ENCODE measurements at regions of chr17 and their contacts with region 1.

Region 1: GRCh38 chr17:8997994-8998628 is 23.2 kb upstream of the NTN1 start:
- DNase-seq: peak; percentile 86
- ATAC-seq: peak; percentile 72
- H3K4me3 Mint-ChIP-seq: no peak overlapping the region
- H3K27ac Mint-ChIP-seq: no peak overlapping the region
- H3K4me1 Mint-ChIP-seq: peaks cover 17% of the 10 kb centered on the region
- H3K27me3 Mint-ChIP-seq: peaks cover 23% of the 10 kb centered on the region
- CTCF ChIP-seq: peak; percentile 95

Region 2: GRCh38 chr17:8798846-8799569 is 199.1 kb before region 1 on chr17 and contains the start of gene MFSD6L:
- CTCF ChIA-PET with region 1: interaction called, 12 read pairs
- POLR2A ChIA-PET with region 1: no interaction called
- intact Hi-C with region 1: no loop called
- DNase-seq: peak; percentile 28
- ATAC-seq: no peak
- H3K4me3 Mint-ChIP-seq: no peak within 1 kb of the TSS
- H3K27ac Mint-ChIP-seq: no peak within 1 kb of the TSS
- H3K4me1 Mint-ChIP-seq: no peaks in the 10 kb centered on the region
- H3K27me3 Mint-ChIP-seq: no peaks in the 10 kb centered on the region
- CTCF ChIP-seq: peak; percentile 14
- total RNA-seq, gene MFSD6L: 0.20 to 0.22 TPM

Region 3: GRCh38 chr17:8867361-8867981 is 130.6 kb before region 1 on chr17 and contains the start of gene PIK3R6:
- CTCF ChIA-PET with region 1: interaction called, 10 read pairs
- POLR2A ChIA-PET with region 1: interaction called, 3 read pairs
- intact Hi-C with region 1: no loop called
- DNase-seq: no peak
- ATAC-seq: peak; percentile 57
- H3K4me3 Mint-ChIP-seq: peak within 1 kb of the TSS; percentile 74
- H3K27ac Mint-ChIP-seq: peak within 1 kb of the TSS; percentile 61
- H3K4me1 Mint-ChIP-seq: peaks cover 29% of the 10 kb centered on the region
- H3K27me3 Mint-ChIP-seq: no peaks in the 10 kb centered on the region
- CTCF ChIP-seq: no peak
- total RNA-seq, gene PIK3R6: 3.8 to 3.9 TPM

Region 4: DNA sequence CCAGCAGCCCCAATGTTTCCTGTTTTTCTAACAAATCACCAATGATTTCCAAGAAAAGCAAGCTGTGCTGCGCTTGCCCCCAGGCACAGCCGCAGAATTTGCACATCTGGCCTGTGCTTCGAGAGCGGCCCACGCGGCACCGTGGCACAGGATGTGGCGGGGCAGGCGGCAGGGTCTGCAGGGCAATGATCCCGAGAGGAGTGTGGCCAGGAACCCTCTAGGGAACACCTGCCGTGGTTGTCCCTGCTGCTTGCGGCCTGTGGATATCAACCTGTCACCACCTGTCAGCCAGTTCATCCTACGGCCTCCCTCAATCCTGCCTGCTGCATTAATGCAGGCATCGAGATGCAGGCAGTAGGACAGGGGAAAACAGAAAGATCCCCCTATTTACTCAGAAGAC is 56.6 kb before region 1 on chr17:
- CTCF ChIA-PET with region 1: interaction called, 12 read pairs
- POLR2A ChIA-PET with region 1: interaction called, 3 read pairs
- intact Hi-C with region 1: no loop called
- DNase-seq: peak; percentile 89
- ATAC-seq: peak; percentile 41
- H3K4me3 Mint-ChIP-seq: peak overlapping the region; percentile 67
- H3K27ac Mint-ChIP-seq: peak overlapping the region; percentile 96
- H3K4me1 Mint-ChIP-seq: peaks cover 87% of the 10 kb centered on the region
- H3K27me3 Mint-ChIP-seq: no peaks in the 10 kb centered on the region
- CTCF ChIP-seq: no peak

Region 5: GRCh38 chr17:9009737-9010136 is 11.6 kb after region 1 on chr17:
- CTCF ChIA-PET with region 1: interaction called, 34 read pairs
- POLR2A ChIA-PET with region 1: interaction called, 3 read pairs
- intact Hi-C with region 1: no loop called
- DNase-seq: no peak
- ATAC-seq: no peak
- H3K4me3 Mint-ChIP-seq: no peak overlapping the region
- H3K27ac Mint-ChIP-seq: no peak overlapping the region
- H3K4me1 Mint-ChIP-seq: peaks cover 2% of the 10 kb centered on the region
- H3K27me3 Mint-ChIP-seq: peaks cover 47% of the 10 kb centered on the region
- CTCF ChIP-seq: no peak

Region 6: DNA sequence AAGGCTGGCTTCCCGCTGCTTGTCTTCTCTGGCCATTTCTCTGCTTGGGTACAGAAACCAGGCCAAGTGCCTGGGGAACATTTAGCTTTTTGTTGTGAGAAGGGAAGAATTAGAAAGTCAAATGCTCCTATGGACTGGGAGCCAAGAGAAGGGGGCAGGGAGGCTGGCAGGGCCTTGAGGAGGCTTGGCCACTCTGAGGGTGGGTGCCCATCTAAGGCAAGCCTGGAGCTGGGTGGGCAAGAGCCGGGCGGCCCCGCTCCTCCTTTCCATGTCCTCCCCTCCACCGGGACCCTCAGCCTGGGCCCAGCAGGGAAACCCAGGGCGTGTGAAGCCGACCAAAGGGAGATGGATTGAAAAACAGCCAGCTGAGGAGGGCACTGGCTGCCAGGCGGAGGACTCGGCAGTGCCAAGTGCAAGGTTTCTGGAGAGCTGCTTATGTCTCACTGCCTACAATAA is 92.6 kb after region 1 on chr17:
- CTCF ChIA-PET with region 1: no interaction called
- POLR2A ChIA-PET with region 1: no interaction called
- intact Hi-C with region 1: no loop called
- DNase-seq: no peak
- ATAC-seq: no peak
- H3K4me3 Mint-ChIP-seq: no peak overlapping the region
- H3K27ac Mint-ChIP-seq: no peak overlapping the region
- H3K4me1 Mint-ChIP-seq: no peaks in the 10 kb centered on the region
- H3K27me3 Mint-ChIP-seq: peaks cover 5% of the 10 kb centered on the region
- CTCF ChIP-seq: no peak

Measured in activated CD8-positive, alpha-beta T cell treated with anti-CD3 and anti-CD28 coated beads for 36 hours (primary cell).